AG04449 (cell line): ENCODE measurements at regions of chr2 and their contacts with region 1.

Region 1: DNA sequence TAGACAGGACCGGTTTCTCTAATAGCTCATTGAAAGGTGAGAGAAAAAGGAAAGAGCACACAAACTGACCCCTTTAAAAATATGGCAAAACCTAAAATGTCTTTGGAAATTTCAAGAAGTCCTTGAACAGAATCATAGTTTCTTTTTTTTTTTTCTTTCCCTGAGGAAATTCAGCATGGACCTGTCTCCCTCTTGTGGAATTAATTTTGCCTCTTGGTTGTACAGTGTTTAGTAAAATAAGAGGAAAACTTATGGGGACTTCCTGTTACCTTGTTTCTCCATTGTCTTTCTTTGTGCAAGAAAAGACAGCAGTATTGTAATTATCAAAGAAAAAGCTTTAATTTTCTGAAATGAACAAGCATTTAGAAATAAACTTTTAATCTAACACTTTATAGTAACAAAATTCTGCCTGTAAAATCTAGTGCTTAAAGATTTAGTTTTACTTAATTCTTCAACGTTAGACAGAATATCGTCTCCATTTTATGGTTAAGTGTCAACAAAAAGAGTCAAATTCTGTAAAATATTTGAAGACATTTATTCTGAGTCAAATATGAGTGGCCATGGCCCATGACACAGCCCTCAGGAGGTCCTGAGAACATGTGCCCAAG is 176.3 kb upstream of the NABP1 start:
- DNase-seq: no peak
- H3K4me3 ChIP-seq: no peak overlapping the region
- CTCF ChIP-seq: peak; percentile 34

Region 2: DNA sequence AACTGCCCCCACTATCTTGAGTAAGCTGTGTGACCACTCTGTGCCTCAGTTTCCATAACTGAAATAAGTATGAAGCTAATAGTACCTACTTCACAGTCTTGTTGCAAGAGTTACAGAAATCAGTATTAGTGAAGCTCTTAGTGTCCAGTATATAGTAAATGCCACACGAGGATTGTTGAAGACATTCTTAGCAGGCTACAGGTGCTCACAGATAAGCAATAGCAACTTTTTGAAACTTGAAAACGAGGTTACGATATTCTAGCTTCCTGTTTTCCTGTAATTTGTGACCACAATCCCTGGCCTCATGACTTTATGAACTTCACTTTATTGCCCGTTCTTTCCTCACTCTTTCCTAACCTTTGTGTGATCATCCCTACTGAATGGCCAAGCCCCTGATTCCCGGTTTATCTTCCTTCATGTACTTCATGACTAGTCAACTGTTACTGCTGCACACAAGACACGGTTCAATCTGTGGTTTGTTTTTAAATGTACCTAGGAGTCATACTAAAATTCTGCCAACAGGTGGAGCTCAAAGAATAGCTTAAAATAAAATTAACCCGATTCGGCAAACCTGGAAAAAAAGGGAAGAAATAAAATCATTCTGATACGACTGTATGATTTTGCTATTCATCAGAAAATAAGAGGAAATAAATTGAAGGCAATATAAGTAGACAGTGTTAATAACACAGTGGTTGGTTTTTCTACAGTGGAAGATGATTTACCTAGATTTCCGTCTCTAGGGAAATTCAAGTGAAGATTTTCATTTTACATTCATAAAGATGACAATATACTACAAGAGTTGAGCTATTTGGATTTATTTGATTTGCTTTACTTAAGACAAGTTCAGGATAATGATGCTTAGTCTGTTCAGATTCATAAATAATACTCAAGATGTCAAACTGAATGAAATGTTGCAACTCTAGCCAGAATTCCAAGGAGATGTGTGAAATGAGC is 449.6 kb before region 1 on chr2:
- CTCF ChIA-PET with region 1: interaction called, 69 read pairs
- POLR2A ChIA-PET with region 1: no interaction called
- DNase-seq: no peak
- H3K4me3 ChIP-seq: no peak overlapping the region
- CTCF ChIP-seq: peak; percentile 26

Region 3: GRCh38 chr2:191218292-191218898 is 283.3 kb before region 1 on chr2:
- CTCF ChIA-PET with region 1: interaction called, 77 read pairs
- POLR2A ChIA-PET with region 1: no interaction called
- DNase-seq: no peak
- H3K4me3 ChIP-seq: no peak overlapping the region
- CTCF ChIP-seq: peak; percentile 60

Region 4: DNA sequence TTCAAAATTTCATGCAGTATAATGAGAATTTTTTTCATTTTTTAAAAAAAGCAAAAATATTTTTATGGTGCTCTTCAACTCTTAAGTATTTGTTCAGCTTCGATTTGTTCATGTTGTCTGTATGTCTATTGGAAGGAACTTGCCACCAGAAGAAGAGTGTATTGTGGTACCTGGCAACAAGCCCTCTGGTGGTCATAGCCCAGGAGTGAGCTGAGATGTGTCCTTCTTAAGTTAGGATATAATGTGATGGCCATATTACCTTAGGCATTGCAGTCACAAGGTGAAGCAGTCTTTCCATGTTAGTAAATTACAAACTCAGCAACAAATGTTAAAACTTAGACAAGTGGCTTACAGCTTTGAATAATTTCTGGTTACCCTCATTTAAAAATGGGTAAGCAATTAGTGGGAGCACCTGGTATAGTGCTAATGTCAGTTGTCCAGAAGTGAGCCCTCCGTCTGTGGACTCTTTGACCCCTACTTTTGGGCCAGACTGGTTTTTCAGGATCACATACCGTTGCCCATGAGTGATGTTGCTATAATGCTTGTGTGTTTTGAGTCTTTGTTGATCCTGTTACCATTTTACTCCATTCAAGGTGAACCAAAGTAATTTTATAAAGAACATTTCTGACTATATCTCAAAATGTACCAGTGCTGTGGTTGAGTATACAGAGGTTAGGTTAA is 199.1 kb before region 1 on chr2:
- CTCF ChIA-PET with region 1: interaction called, 23 read pairs
- POLR2A ChIA-PET with region 1: no interaction called
- DNase-seq: no peak
- H3K4me3 ChIP-seq: no peak overlapping the region
- CTCF ChIP-seq: peak; percentile 5

Region 5: GRCh38 chr2:191428141-191428540 is 73.5 kb before region 1 on chr2:
- CTCF ChIA-PET with region 1: interaction called, 26 read pairs
- POLR2A ChIA-PET with region 1: no interaction called
- DNase-seq: no peak
- H3K4me3 ChIP-seq: no peak overlapping the region
- CTCF ChIP-seq: no peak

Region 6: GRCh38 chr2:191521608-191522208 is 20.0 kb after region 1 on chr2:
- CTCF ChIA-PET with region 1: interaction called, 32 read pairs
- POLR2A ChIA-PET with region 1: no interaction called
- DNase-seq: no peak
- H3K4me3 ChIP-seq: no peak overlapping the region
- CTCF ChIP-seq: peak; percentile 47